ENCODE measurements at regions of chr5 and their contacts with region 1.

Region 1: DNA sequence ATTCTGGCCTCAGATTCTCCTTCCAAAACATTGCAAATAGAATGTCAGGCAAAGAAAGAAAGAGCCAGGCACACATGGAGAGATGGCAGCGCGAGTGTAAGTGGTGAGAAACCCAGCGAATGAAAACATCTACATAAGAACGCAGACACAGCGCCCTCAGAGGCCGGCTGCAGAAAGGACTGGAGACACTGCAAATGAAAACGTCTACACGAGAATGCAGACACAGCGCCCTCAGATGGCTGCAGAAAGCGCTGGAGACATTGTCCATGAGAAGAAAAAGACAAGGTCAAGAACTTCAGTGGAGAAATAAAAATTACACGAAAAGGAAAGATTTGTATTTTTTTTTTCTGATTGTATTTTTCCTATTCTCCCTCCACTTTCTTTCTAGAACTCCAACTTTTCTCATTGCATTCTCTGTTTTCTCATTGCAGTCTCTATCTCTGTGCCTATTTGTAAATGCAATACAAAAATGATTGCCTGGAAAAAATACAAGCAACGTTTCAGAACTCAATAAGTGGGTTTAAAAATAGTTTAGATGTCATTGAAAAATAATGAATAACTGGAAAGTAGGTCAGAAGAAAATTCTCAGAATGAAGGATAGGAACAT is 117.9 kb upstream of the LPCAT1 start:
- DNase-seq: peak; percentile 92
- H3K4me3 Mint-ChIP-seq: no peak overlapping the region
- H3K27ac Mint-ChIP-seq: no peak overlapping the region
- H3K4me1 Mint-ChIP-seq: peaks cover 17% of the 10 kb centered on the region
- H3K27me3 Mint-ChIP-seq: peaks cover 33% of the 10 kb centered on the region

Region 2: GRCh38 chr5:1004461-1005248 is 637.0 kb before region 1 on chr5:
- CTCF ChIA-PET with region 1: no interaction called
- intact Hi-C with region 1: loop called (anchors 10 kb)
- DNase-seq: peak; percentile 70
- H3K4me3 Mint-ChIP-seq: peak overlapping the region; percentile 50
- H3K27ac Mint-ChIP-seq: no peak overlapping the region
- H3K4me1 Mint-ChIP-seq: peaks cover 22% of the 10 kb centered on the region
- H3K27me3 Mint-ChIP-seq: peaks cover 31% of the 10 kb centered on the region

Region 3: DNA sequence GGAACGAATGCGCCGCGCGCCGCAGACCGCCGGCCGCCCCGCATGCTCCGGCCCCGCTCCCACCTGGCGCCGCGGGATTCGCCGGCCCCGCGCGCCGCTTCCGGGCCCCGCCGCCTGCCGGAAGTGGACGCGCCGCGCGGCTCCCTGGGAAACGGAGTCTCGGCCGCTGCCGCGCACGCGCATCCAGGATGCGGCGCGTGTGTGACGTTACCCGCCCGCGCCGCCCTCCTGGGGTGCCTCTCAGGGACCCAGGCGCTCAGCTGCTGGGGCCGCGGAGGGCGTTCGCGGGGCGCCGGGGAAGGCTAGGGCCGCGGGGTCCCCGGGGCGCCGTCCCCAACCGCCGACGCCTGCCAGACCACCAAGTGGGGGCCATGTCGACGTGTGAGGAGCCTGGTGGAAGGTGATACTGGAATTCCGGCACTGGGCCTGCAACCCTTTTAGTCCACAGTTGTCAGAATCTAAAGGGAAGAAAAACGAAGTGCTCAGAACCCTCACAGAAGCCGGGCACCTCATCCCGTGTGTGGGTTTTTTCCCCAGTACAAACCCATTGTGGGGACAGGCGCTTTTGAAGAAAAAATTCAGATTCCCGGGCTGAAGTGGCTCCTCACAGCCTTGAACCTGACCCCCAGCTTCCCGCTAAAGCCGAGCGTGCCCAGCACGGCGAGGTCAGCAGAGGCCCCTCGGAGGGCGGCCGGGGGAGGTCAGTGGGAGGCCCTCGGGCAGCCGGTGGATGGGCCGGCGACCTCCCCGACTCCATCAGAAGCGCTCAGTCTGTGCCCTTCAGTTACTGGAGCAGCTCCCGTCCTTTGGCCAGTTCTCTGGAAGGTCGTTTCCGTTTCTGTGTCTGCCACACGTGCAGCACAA is 296.5 kb before region 1 on chr5 and contains the start of gene CLPTM1L:
- CTCF ChIA-PET with region 1: interaction called, 3 read pairs
- intact Hi-C with region 1: loop called (anchors 10 kb)
- DNase-seq: peak; percentile 87
- H3K4me3 Mint-ChIP-seq: peak within 1 kb of the TSS; percentile 79
- H3K27ac Mint-ChIP-seq: peak within 1 kb of the TSS; percentile 70
- H3K4me1 Mint-ChIP-seq: peaks cover 31% of the 10 kb centered on the region
- H3K27me3 Mint-ChIP-seq: no peaks in the 10 kb centered on the region
- total RNA-seq, gene CLPTM1L: 48.0 to 48.5 TPM

Region 4: DNA sequence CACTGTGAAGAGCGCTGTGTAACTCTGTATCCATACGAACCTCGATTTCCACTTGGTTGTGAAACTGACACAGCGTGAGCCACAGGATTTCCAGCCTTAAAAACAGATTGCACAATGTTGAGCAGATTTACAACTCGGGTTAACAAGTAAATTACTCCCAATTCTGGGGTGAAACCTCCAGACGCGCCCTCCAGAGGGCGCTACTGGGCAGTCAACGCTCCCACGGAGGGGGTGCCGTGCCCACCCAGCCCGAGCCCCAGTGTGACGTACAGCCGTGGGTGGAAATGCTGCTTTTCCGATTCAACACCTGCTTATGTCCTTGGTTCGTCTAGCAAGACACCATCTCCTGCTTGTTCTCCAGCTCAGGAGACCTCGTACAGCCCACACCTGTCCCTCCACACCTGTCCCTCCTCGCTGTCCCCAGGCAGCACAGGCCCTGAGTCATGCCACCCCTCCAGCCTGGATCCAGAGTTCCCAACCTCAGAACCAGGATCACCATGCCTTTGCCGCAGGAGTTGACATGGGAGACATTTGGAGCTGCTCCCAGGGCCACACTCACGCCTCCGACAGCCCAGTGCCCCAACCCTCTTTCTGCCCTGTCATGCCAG is 162.0 kb before region 1 on chr5:
- CTCF ChIA-PET with region 1: interaction called, 13 read pairs
- intact Hi-C with region 1: loop called (anchors 1 kb)
- DNase-seq: peak; percentile 48
- H3K4me3 Mint-ChIP-seq: no peak overlapping the region
- H3K27ac Mint-ChIP-seq: no peak overlapping the region
- H3K4me1 Mint-ChIP-seq: peaks cover 4% of the 10 kb centered on the region
- H3K27me3 Mint-ChIP-seq: no peaks in the 10 kb centered on the region

Region 5: DNA sequence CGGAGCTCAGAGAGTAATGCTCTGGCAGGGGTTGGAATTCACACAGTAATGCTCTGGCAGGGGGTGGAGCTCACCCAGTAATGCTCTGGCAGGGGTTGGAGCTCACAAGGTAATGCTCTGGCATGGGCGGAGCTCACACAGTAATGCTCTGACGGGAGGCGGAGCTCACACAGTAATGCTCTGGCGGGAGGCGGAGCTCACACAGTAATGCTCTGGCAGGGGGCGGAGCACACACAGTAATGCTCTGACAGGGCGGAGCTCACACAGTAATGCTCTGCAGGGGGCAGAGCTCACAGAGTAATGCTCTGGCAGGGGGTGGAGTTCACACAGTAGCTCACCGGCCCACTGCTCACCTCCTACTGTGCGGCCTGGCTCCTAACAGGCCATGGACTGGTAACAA is 70.7 kb before region 1 on chr5:
- CTCF ChIA-PET with region 1: interaction called, 3 read pairs
- intact Hi-C with region 1: loop called (anchors 2 kb)
- DNase-seq: no peak
- H3K4me3 Mint-ChIP-seq: no peak overlapping the region
- H3K27ac Mint-ChIP-seq: no peak overlapping the region
- H3K4me1 Mint-ChIP-seq: no peaks in the 10 kb centered on the region
- H3K27me3 Mint-ChIP-seq: no peaks in the 10 kb centered on the region

Region 6: GRCh38 chr5:1652596-1653345 is 11.1 kb after region 1 on chr5:
- CTCF ChIA-PET with region 1: interaction called, 19 read pairs
- intact Hi-C with region 1: no loop called
- DNase-seq: no peak
- H3K4me3 Mint-ChIP-seq: no peak overlapping the region
- H3K27ac Mint-ChIP-seq: no peak overlapping the region
- H3K4me1 Mint-ChIP-seq: peaks cover 5% of the 10 kb centered on the region
- H3K27me3 Mint-ChIP-seq: peaks cover 37% of the 10 kb centered on the region

Region 7: DNA sequence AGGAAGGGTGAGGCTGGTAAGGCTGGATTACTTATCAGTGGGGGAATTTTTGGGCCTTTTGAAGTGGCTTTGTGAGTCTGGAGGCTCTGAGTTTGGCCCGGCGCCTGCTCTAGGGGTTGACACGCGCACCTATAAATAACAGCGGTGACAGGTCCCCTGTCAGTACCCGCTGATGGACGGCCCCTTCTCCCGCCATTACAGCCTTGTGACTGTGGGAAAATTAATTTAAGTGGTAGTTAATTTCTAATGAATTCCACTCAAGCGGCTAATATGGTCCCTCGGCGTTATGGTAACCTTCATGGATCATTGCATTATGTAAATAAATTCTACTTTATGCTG is 141.5 kb after region 1 on chr5:
- CTCF ChIA-PET with region 1: no interaction called
- intact Hi-C with region 1: no loop called
- DNase-seq: no peak
- H3K4me3 Mint-ChIP-seq: no peak overlapping the region
- H3K27ac Mint-ChIP-seq: no peak overlapping the region
- H3K4me1 Mint-ChIP-seq: peaks cover 1% of the 10 kb centered on the region
- H3K27me3 Mint-ChIP-seq: peaks cover 3% of the 10 kb centered on the region

Region 8: DNA sequence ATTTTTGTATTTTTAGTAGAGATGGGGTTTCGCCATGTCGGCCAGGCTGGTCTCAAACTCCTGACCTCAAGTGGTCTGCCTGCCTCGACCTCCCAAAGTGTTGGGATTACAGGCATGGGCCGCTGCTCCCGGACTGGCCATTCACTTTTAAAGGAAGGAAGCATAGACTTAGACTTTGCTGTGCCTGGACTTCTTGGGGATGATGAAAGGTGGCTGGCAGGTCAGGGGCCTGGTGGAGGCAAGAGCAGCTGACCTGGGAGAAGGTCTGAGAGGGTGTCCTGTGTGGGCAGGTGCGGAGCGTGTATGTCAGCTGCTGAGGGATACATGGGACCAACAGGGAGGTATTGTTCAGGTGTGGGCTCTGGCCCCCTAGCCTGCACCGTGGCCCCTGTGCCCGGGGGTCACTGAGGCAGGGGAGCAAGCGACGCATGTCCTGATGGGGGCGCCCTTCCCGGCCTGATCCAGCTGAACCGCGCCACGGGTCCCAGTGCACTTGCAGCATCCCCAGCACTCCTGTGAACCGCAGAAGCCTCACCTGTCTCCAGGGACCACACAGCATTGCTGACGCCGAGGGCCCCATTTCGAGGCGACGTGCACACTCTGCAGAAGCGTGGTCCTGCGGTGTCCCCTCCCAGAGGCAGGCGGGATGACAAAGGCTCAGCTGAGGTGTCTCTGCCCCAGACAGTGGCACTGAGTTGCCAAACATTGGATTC is 182.6 kb after region 1 on chr5:
- CTCF ChIA-PET with region 1: no interaction called
- intact Hi-C with region 1: no loop called
- DNase-seq: no peak
- H3K4me3 Mint-ChIP-seq: no peak overlapping the region
- H3K27ac Mint-ChIP-seq: no peak overlapping the region
- H3K4me1 Mint-ChIP-seq: no peaks in the 10 kb centered on the region
- H3K27me3 Mint-ChIP-seq: no peaks in the 10 kb centered on the region

Measured in activated naive CD4-positive, alpha-beta T cell treated with anti-CD3 and anti-CD28 coated beads for 36 hours (primary cell).